Gastrocnemius medialis (tissue), 4 donors: ENCODE measurements at regions of chr3 and their contacts with region 1.

Region 1: GRCh38 chr3:66407611-66408218 is 93.1 kb downstream of the LRIG1 start:
- DNase-seq: peak; percentile 57 to 84
- ATAC-seq: peak; percentile 32 to 61
- H3K4me3 ChIP-seq: no peak overlapping the region
- H3K27ac ChIP-seq: peak overlapping the region; percentile 77 to 92 (median 80)
- H3K4me1 ChIP-seq: peaks cover 60 to 68% of the 10 kb centered on the region in 2 donors
- H3K27me3 ChIP-seq: no peaks in the 10 kb centered on the region
- CTCF ChIP-seq: peak; percentile 91 to 98 (median 96)
- POLR2A ChIP-seq: no peak

Region 2: GRCh38 chr3:66428733-66429132 is 21.0 kb after region 1 on chr3:
- in situ Hi-C with region 1: no loop called
- intact Hi-C with region 1: no loop called
- DNase-seq: peak; percentile 91 to 93
- ATAC-seq: peak; percentile 64 to 85
- H3K4me3 ChIP-seq: peak overlapping the region; percentile 10 to 38 (median 14)
- H3K27ac ChIP-seq: peak overlapping the region; percentile 77 to 90 (median 82)
- H3K4me1 ChIP-seq: peaks cover 85 to 91% of the 10 kb centered on the region in 2 donors
- H3K27me3 ChIP-seq: no peaks in the 10 kb centered on the region
- CTCF ChIP-seq: no peak
- POLR2A ChIP-seq: peak; percentile 20 to 60

Region 3: DNA sequence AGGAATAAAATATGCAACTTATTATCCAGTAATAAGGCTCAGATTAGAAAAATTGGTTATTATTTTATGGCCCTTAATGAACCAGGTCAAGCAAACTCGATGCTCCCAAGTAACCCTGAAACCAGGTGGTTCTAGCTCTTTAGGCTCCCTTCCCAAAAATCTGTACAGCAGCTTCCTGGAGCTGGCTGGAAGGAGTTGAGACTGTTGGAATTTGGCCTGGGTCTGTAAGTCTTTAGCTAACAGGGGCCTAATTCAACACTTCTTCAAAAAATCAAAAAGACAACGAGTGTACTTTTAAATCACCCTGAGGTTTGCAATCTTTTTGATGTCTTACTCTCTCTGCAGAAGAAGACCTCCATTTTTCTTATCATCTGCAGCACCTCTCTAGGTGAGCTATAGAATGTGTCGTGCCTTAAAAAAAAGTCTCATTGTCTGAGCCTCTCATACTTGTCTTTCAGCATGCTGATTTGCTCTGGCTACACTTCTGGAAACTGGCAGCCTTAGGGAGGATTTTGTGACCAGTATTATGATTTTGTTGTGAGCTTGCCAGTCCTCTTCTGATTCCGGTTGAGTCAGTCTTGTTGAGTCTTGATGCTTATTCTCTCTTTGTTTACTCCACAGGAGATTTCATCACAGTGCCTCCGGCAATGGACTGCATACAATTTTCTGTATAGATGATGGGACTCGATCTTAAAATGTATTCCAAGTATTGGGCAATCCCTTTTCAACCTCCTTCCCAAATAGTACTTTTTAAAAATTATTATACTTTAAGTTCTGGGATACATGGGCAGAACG is 355.4 kb after region 1 on chr3:
- in situ Hi-C with region 1: no loop called
- intact Hi-C with region 1: loop called (anchors 5 kb)
- DNase-seq: peak; percentile 56 to 66
- ATAC-seq: peak; percentile 89 to 94
- H3K4me3 ChIP-seq: no peak overlapping the region
- H3K27ac ChIP-seq: peak overlapping the region; percentile 33 to 87 (median 82)
- H3K4me1 ChIP-seq: peaks cover 29 to 33% of the 10 kb centered on the region in 2 donors
- H3K27me3 ChIP-seq: no peaks in the 10 kb centered on the region
- CTCF ChIP-seq: no peak
- POLR2A ChIP-seq: no peak